ENCODE measurements at regions of chr20 and their contacts with region 1.

Region 1: DNA sequence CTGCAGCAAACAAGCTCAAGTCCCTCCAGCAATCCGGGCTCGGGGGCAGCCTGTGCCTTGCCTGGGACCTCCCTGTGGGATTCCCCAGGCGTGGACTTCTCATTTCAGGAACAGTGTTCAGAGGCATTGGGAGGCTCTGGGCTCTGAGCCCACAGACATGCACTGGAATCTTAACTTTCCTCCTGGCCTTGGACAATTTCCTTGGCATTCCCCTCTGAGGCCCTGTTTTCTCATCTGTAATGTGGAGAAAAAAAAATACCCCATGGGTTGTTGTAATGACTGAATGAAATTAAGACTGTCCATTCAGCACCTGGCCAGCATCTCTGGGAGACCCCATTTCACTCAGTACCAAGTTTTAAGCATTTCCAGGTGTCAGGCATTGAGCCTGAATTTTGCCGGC is 17.6 kb downstream of the BPIFB4 start:
- DNase-seq: no peak
- ATAC-seq: no peak
- H3K4me3 ChIP-seq: no peak overlapping the region
- H3K27ac ChIP-seq: no peak overlapping the region
- H3K4me1 ChIP-seq: no peaks in the 10 kb centered on the region
- H3K27me3 ChIP-seq: no peaks in the 10 kb centered on the region
- CTCF ChIP-seq: no peak
- POLR2A ChIP-seq: no peak
- RAD21 ChIP-seq: no peak

Region 2: GRCh38 chr20:32789896-32790750 is 306.9 kb before region 1 on chr20:
- CTCF ChIA-PET with region 1: interaction called, 10 read pairs
- POLR2A ChIA-PET with region 1: no interaction called
- RAD21 ChIA-PET with region 1: interaction called in 1 of 2 experiments, 4 read pairs
- intact Hi-C with region 1: loop called (anchors 1 kb)
- DNase-seq: no peak
- ATAC-seq: peak; percentile 96
- H3K4me3 ChIP-seq: no peak overlapping the region
- H3K27ac ChIP-seq: no peak overlapping the region
- H3K4me1 ChIP-seq: no peaks in the 10 kb centered on the region
- H3K27me3 ChIP-seq: no peaks in the 10 kb centered on the region
- CTCF ChIP-seq: peak; percentile 76 to 99 (median 97); a peak in 5 of 6 replicates
- POLR2A ChIP-seq: no peak
- RAD21 ChIP-seq: peak; percentile 73

Region 3: GRCh38 chr20:33211817-33212424 is 114.9 kb after region 1 on chr20:
- CTCF ChIA-PET with region 1: interaction called, 8 read pairs
- POLR2A ChIA-PET with region 1: no interaction called
- RAD21 ChIA-PET with region 1: interaction called in 1 of 2 experiments, 4 read pairs
- intact Hi-C with region 1: loop called (anchors 1 kb)
- DNase-seq: peak; percentile 61
- ATAC-seq: peak; percentile 95
- H3K4me3 ChIP-seq: no peak overlapping the region
- H3K27ac ChIP-seq: no peak overlapping the region
- H3K4me1 ChIP-seq: no peaks in the 10 kb centered on the region
- H3K27me3 ChIP-seq: peaks cover 56% of the 10 kb centered on the region
- CTCF ChIP-seq: peak; percentile 72 to 80 (median 75)
- POLR2A ChIP-seq: no peak
- RAD21 ChIP-seq: peak; percentile 76

Region 4: GRCh38 chr20:33291830-33292355 is 194.9 kb after region 1 on chr20:
- CTCF ChIA-PET with region 1: interaction called, 6 read pairs
- POLR2A ChIA-PET with region 1: no interaction called
- RAD21 ChIA-PET with region 1: no interaction called
- intact Hi-C with region 1: loop called (anchors 5 kb)
- DNase-seq: peak; percentile 19
- ATAC-seq: peak; percentile 88
- H3K4me3 ChIP-seq: no peak overlapping the region
- H3K27ac ChIP-seq: no peak overlapping the region
- H3K4me1 ChIP-seq: no peaks in the 10 kb centered on the region
- H3K27me3 ChIP-seq: peaks cover 17% of the 10 kb centered on the region; the same call in 1 of the 2 replicates
- CTCF ChIP-seq: peak; percentile 79 to 100 (median 100); a peak in 5 of 6 replicates
- POLR2A ChIP-seq: no peak
- RAD21 ChIP-seq: peak; percentile 74

Measured in HCT116 (cell line).